Activated B cell treated with CpG ODN at 0.5 μM for 24 hours (primary cell): ENCODE measurements at regions of chr16 and their contacts with region 1.

Region 1: DNA sequence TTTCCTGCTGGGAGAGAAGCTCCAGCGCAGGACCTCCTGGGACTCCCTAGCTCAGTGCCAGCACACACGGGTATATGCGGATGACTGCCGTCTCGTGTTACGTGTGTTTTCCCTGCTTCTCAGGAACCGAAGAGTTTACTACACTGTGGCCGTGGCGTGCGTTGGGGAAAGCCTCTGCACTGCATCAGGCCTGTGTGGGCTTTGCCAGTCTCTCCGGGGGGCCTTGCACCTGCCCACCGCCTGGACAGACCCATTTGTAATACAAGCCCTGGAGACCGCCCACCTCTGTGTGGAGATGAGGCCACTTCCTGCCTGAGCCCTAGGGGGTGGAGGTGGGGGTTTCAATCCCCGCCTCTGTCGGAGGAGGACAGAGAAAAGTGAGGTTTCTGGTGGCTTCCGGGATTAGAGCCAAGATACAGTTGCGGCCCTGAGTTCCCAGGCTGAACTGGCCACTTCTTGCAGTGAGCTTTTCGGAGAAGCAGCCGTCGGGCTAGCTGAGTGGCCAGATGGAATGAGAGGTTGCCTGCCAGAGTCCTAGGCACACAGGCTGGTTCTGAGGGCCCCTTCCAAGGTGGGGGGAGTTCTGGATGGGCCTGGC is 43.4 kb upstream of the GSE1 start:
- DNase-seq: no peak
- ATAC-seq: peak; percentile 53
- H3K4me3 Mint-ChIP-seq: peak overlapping the region; percentile 70
- H3K27ac Mint-ChIP-seq: peak overlapping the region; percentile 82
- H3K4me1 Mint-ChIP-seq: peaks cover 74% of the 10 kb centered on the region
- H3K27me3 Mint-ChIP-seq: no peaks in the 10 kb centered on the region
- CTCF ChIP-seq: no peak

Region 2: GRCh38 chr16:85536073-85536410 is 33.7 kb before region 1 on chr16:
- CTCF ChIA-PET with region 1: no interaction called
- POLR2A ChIA-PET with region 1: no interaction called
- intact Hi-C with region 1: loop called (anchors 5 kb)
- DNase-seq: no peak
- ATAC-seq: no peak
- H3K4me3 Mint-ChIP-seq: no peak overlapping the region
- H3K27ac Mint-ChIP-seq: no peak overlapping the region
- H3K4me1 Mint-ChIP-seq: peaks cover 2% of the 10 kb centered on the region
- H3K27me3 Mint-ChIP-seq: no peaks in the 10 kb centered on the region
- CTCF ChIP-seq: no peak

Region 3: DNA sequence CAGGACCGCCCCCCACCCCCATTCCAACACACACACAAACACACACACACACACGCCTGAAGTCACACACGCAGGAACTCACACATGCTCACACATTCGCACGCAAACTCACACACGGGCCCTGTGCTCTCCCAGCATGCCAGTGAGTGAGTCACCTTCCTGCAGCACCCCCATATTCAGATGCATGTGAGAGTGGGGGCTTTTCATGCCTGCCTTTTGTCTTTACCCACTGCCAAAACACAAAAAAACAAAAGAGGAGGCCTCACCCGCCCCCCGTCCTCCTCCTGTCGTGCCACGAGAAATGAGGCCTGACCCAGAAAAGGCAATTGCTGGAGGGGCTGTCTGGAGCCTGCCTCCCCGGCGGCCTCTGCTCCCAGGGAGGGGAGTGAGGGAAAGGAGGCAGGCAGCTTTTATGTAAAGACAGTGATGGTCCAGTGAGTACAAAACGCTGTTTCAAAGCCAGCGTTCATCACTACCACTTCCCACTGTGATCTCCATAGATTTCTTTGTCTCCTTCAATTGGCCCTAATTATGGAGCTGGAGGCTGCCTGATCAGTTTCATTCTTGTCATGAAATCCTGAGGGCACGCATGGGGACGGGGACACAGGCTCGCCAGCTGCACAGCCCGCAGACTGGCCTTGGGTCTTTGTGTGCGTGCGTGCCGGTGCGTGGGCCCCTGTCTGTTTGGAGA is 13.9 kb after region 1 on chr16:
- CTCF ChIA-PET with region 1: no interaction called
- POLR2A ChIA-PET with region 1: no interaction called
- intact Hi-C with region 1: no loop called
- DNase-seq: no peak
- ATAC-seq: no peak
- H3K4me3 Mint-ChIP-seq: no peak overlapping the region
- H3K27ac Mint-ChIP-seq: no peak overlapping the region
- H3K4me1 Mint-ChIP-seq: peaks cover 28% of the 10 kb centered on the region
- H3K27me3 Mint-ChIP-seq: no peaks in the 10 kb centered on the region
- CTCF ChIP-seq: no peak

Region 4: DNA sequence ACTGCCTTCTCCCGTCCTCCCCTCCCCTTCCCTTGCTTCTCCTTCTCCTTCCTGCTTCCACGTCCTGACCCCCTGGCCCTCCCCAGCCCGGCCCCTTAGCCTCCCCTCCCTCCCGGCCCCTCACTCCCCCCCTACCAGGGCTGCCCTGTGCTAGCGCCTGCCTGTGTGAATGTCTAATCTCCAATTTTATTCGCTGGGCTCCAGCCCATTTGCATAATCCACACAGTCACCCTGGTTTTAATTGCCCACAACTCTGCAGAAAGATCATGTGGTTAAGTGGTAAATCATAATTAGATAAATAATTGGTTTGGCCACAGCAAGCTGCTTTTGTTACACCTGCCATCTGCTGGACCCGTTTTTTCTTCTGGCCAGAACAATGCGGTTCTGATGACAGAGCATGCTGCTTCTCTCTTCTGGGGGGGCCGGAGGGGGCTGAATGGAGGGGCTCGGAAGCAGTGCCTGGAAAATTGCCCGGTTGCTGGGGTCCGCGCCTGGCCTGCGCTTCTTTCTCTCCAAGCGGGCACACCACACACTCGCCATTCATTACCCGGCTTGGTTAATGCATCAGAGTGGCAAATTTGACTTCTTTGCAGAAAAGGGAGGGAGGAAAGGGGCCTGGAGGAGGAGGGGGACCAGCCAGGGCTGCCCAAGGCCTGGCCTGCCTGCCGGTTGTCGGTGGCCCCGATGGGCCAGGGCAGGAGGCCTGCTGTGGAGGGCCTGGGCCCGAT is 23.9 kb after region 1 on chr16:
- CTCF ChIA-PET with region 1: no interaction called
- POLR2A ChIA-PET with region 1: no interaction called
- intact Hi-C with region 1: loop called (anchors 1 kb)
- DNase-seq: no peak
- ATAC-seq: no peak
- H3K4me3 Mint-ChIP-seq: no peak overlapping the region
- H3K27ac Mint-ChIP-seq: no peak overlapping the region
- H3K4me1 Mint-ChIP-seq: peaks cover 39% of the 10 kb centered on the region
- H3K27me3 Mint-ChIP-seq: no peaks in the 10 kb centered on the region
- CTCF ChIP-seq: no peak